T-cell (primary cell): ENCODE measurements at regions of chr10 and their contacts with region 1.

Region 1: GRCh38 chr10:96641396-96642295 is 54.8 kb upstream of the TM9SF3 start:
- DNase-seq: no peak
- ATAC-seq: no peak
- H3K4me3 ChIP-seq: no peak overlapping the region
- H3K4me3 Mint-ChIP-seq: no peak overlapping the region
- H3K27ac ChIP-seq: no peak overlapping the region
- H3K27ac Mint-ChIP-seq: no peak overlapping the region
- H3K4me1 ChIP-seq: no peaks in the 10 kb centered on the region
- H3K4me1 Mint-ChIP-seq: peaks cover 0 to 5% (median under 1%) of the 10 kb centered on the region in 3 donors
- H3K27me3 ChIP-seq: no peaks in the 10 kb centered on the region
- H3K27me3 Mint-ChIP-seq: no peaks in the 10 kb centered on the region

Region 2: GRCh38 chr10:96470116-96470743 is 171.4 kb before region 1 on chr10:
- CTCF ChIA-PET with region 1: no interaction called
- POLR2A ChIA-PET with region 1: no interaction called
- DNase-seq: peak in 9 of 35 experiments; percentile 4 to 31 (median 8)
- ATAC-seq: peak in 2 of 4 experiments; percentile 32 to 36
- H3K4me3 ChIP-seq: no peak overlapping the region
- H3K4me3 Mint-ChIP-seq: no peak overlapping the region
- H3K27ac ChIP-seq: no peak overlapping the region
- H3K27ac Mint-ChIP-seq: no peak overlapping the region
- H3K4me1 ChIP-seq: no peaks in the 10 kb centered on the region
- H3K4me1 Mint-ChIP-seq: no peaks in the 10 kb centered on the region
- H3K27me3 ChIP-seq: peaks cover 0 to 23% of the 10 kb centered on the region in 2 experiments
- H3K27me3 Mint-ChIP-seq: peaks cover 21 to 31% of the 10 kb centered on the region in 2 donors

Region 3: GRCh38 chr10:96651998-96652431 is 10.4 kb after region 1 on chr10:
- CTCF ChIA-PET with region 1: interaction called, 5 to 10 read pairs
- POLR2A ChIA-PET with region 1: no interaction called
- DNase-seq: peak in 33 of 35 experiments; percentile 8 to 69 (median 43)
- ATAC-seq: peak; percentile 45 to 85 (median 66)
- H3K4me3 ChIP-seq: no peak overlapping the region
- H3K4me3 Mint-ChIP-seq: peak overlapping the region in 1 of 3 donors; percentile 51
- H3K27ac ChIP-seq: peak overlapping the region; percentile 55
- H3K27ac Mint-ChIP-seq: peak overlapping the region; percentile 59 to 71
- H3K4me1 ChIP-seq: peaks cover 10 to 52% of the 10 kb centered on the region in 2 experiments
- H3K4me1 Mint-ChIP-seq: peaks cover 22 to 43% (median 26%) of the 10 kb centered on the region in 3 donors
- H3K27me3 ChIP-seq: no peaks in the 10 kb centered on the region
- H3K27me3 Mint-ChIP-seq: no peaks in the 10 kb centered on the region